GM10248 (cell line): ENCODE measurements at regions of chr12 and their contacts with region 1.

Region 1: GRCh38 chr12:12654691-12655460 is 41.1 kb downstream of the GPR19 start:
- DNase-seq: no peak
- CTCF ChIP-seq: no peak

Region 2: DNA sequence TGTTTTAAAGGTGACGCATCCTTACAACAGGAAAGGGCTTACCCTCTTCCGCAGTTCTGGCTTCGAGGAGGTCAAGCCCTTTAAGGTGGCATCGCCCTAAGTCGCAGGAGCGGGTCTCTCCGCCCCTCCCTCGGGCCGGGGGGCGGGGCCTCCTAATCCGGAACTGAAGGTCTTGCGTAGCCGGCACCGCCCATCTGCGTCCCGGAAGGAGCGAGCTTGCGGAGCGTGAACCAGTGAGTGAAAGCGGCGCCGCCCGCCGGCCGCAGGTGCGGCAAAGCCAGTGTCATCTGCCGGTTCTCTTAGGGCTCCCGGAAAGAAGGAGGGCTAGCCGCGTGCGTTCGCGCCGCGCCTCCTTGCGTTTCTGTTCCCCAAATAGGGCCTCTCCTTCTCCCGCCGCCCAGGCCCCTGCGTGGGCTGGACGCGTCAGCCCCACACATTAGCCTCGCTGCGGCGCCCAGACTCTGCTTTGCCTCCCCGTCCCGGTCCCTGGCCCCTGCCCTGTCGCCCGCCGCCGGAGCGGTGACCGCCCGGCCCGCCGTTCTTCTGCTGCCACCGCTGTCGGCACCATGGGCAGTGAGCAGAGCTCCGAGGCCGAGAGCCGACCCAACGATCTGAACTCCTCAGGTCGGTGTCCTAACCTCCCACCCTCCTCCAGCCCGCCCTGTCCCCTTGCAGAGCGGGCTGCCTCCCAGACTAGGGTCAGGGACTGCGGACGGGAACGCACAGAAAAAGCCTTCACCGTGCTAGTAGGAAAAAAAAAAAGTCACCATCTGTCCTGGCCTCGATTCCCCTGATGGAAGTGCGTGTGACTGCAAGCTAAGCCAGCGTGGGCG is 297.8 kb before region 1 on chr12 and contains the start of gene BORCS5:
- CTCF ChIA-PET with region 1: interaction called, 10 read pairs
- POLR2A ChIA-PET with region 1: no interaction called
- DNase-seq: peak; percentile 96
- CTCF ChIP-seq: peak; percentile 29

Region 3: GRCh38 chr12:12432364-12432763 is 222.5 kb before region 1 on chr12:
- CTCF ChIA-PET with region 1: no interaction called
- POLR2A ChIA-PET with region 1: no interaction called
- DNase-seq: no peak
- CTCF ChIP-seq: no peak

Region 4: GRCh38 chr12:12606781-12607589 is 47.9 kb before region 1 on chr12:
- CTCF ChIA-PET with region 1: interaction called, 15 read pairs
- POLR2A ChIA-PET with region 1: no interaction called
- DNase-seq: peak; percentile 49
- CTCF ChIP-seq: no peak

Region 5: DNA sequence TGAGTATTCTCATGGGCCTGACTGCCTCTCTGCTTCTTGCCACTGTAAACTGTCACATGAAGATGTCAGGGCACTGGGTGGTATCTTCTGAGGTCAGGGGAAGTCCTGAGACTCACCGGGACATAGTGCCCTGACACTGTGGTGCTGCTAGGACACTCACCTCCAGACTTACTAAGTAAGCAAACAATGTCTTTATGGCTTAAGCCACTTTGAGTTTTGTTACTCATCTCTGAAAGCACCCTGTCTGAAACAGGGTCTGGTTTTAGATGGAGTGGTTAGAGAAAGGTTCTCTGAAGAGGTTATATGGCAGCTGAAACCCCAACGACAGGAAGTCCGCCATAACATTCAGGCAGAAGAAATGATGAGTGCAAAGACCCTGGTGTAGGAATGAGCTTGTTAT is 18.4 kb after region 1 on chr12:
- CTCF ChIA-PET with region 1: interaction called, 33 read pairs
- POLR2A ChIA-PET with region 1: no interaction called
- DNase-seq: no peak
- CTCF ChIP-seq: no peak

Region 6: DNA sequence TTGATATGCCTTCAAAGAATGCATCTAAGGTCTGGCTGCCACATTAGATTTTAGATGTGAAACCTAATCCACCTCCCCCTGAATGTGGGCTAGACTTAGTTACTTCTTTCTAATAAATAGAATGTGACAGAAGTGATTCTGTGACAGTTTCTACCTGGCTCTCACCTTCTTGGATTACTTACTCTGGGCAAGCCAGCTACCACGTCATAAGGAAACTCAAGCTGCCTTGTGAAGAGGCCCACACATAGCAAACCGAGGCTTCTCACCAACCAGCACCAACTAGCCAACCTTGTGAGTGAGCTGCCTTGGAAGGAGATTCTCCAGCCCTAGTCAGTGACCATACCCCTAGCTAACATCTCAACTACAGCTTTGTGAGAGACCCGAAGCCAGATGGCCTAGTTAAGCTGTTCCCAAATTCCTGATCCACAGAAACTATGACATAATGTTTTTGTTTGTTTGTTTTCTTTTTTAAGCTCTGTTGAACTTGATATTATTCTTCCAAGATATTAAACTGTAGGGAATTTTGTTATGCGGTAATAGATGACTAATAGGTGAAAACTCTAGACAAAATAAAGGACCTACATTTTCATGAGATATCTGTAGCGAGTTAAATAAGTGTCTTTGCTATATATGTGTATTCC is 34.9 kb after region 1 on chr12:
- CTCF ChIA-PET with region 1: interaction called, 10 read pairs
- POLR2A ChIA-PET with region 1: no interaction called
- DNase-seq: no peak
- CTCF ChIP-seq: no peak

Region 7: GRCh38 chr12:12745576-12746211 is 90.8 kb after region 1 on chr12:
- CTCF ChIA-PET with region 1: no interaction called
- POLR2A ChIA-PET with region 1: no interaction called
- DNase-seq: no peak
- CTCF ChIP-seq: no peak

Region 8: GRCh38 chr12:12934556-12934955 is 279.7 kb after region 1 on chr12:
- CTCF ChIA-PET with region 1: no interaction called
- POLR2A ChIA-PET with region 1: no interaction called
- DNase-seq: no peak
- CTCF ChIP-seq: no peak